GM13977 (cell line): ENCODE measurements at regions of chr14 and their contacts with region 1.

Region 1: GRCh38 chr14:48398675-48399282 is 723.4 kb upstream of the MDGA2 start:
- DNase-seq: peak; percentile 39
- CTCF ChIP-seq: peak; percentile 78

Region 2: DNA sequence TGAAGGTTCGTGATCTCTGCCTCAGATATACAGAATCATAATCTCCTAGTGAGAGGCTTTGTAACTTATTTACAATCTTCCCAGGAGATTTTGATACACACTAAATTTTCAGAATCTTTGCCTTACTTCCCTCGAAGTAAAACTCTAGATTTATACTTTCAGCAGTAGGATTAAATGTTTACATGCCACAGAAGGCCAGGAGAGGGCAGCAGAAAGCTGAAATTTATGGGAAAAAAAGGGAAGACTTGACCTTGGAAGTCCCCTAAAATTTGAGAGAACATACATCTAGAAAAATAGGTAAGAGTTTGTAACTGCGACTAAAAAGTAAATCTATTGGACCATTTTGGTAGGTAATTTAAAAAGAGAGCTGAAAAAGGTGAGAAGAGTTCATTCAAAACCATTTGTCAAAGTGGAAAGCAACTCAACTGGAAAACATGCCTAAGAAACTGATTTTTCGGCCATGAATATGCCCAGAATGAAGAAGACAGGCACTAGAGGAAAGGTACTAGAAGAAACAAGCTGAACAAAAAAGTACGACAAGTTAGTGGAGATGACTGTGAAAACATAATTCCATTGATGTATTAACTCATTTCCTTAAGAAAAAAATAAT is 481.3 kb before region 1 on chr14:
- in situ Hi-C with region 1: loop called (anchors 25 kb)
- DNase-seq: peak; percentile 8
- CTCF ChIP-seq: peak; percentile 66

Region 3: DNA sequence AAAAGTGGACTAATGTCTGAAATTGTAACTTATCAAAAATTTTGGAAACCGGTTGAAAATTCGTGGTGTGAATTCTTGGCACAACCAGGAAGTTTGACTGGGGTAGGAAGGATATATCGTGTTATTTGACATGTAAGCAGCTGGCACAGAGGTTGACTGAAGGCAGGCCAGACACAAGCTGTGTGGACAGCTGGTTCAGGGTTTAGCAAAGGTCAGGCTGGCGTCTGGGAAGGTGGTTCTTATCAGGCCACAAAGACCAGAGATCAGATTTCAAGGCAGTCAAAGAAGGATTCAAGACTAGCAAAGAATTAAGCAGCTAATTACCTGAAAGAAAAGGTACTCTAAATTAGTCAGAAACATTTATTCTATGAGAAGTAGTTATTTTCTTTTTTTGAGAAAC is 273.1 kb before region 1 on chr14:
- in situ Hi-C with region 1: no loop called
- DNase-seq: no peak
- CTCF ChIP-seq: no peak

Region 4: DNA sequence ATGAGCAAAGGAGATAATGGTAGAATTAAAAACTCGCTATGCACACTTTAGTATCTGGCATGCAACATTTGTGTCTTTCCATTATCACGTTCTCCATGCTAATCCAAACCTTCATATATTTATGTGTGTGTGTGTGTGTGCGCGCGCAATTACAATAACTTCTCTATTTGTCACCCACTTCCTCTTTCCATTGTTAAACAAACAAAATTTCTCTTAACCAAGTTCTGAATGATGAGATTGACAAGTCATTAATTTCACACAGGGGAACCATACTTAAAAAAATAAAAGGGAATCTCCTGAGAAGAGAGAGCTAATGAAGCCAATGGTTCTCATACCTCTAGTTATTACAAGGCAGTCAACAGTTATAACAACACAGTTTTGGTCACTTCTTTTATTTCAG is 147.5 kb before region 1 on chr14:
- in situ Hi-C with region 1: no loop called
- DNase-seq: no peak
- CTCF ChIP-seq: no peak

Region 5: GRCh38 chr14:49193332-49194065 is 794.7 kb after region 1 on chr14:
- in situ Hi-C with region 1: no loop called
- DNase-seq: peak; percentile 5
- CTCF ChIP-seq: no peak